Psoas muscle (tissue), 8 donors: ENCODE measurements at regions of chr19 and their contacts with region 1.

Region 1: DNA sequence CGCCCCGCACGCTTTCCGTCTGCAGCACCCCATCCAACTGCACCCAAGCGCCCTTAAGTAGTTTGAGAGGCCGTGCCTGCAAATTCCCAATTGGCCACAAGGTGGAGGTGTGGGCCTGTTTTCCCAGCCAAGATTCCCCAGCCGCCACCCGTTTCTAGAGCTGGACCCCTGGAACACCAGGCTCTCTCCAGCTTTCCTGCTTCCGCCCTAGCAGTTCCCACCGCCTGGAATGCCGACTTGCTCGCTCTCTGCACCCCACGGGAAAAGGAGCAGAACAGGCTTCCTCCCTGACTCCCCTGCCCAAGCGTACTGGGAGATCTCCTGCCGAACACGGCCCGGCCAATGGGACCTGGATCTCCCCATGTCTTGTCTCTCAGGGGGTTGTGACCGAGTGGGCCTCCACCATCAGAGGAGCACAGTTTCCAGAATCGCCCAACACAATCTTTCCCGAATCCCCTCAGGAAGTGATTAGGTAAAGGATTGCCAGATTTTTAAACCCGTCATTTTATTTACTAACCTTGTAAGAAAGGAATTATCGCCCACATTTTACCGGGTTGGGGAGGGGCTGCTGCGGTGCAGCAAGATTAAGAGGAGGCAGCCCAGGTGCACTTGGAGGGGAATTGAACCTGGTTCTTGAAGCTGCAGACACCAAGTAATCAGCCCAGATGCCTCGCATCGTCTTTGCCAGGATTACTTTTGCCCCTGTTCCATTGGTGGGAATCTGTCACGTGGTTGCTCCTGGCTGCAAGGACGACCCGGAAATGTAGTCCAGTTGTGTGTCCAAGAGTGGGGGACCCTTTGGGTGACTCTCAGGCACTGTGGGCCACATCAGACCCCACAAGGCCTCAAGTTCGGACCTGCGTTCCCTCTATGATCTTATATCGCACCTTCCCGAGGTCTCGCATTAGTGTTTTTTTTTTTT is 3.5 kb upstream of the NAPSA start:
- DNase-seq: peak; percentile 81 to 86
- ATAC-seq: peak; percentile 89 to 97 (median 94)
- H3K4me3 ChIP-seq: peak overlapping the region; percentile 79
- H3K27ac ChIP-seq: peak overlapping the region; percentile 39
- H3K4me1 ChIP-seq: peaks cover 8% of the 10 kb centered on the region
- H3K27me3 ChIP-seq: no peaks in the 10 kb centered on the region
- CTCF ChIP-seq: peak; percentile 86

Region 2: DNA sequence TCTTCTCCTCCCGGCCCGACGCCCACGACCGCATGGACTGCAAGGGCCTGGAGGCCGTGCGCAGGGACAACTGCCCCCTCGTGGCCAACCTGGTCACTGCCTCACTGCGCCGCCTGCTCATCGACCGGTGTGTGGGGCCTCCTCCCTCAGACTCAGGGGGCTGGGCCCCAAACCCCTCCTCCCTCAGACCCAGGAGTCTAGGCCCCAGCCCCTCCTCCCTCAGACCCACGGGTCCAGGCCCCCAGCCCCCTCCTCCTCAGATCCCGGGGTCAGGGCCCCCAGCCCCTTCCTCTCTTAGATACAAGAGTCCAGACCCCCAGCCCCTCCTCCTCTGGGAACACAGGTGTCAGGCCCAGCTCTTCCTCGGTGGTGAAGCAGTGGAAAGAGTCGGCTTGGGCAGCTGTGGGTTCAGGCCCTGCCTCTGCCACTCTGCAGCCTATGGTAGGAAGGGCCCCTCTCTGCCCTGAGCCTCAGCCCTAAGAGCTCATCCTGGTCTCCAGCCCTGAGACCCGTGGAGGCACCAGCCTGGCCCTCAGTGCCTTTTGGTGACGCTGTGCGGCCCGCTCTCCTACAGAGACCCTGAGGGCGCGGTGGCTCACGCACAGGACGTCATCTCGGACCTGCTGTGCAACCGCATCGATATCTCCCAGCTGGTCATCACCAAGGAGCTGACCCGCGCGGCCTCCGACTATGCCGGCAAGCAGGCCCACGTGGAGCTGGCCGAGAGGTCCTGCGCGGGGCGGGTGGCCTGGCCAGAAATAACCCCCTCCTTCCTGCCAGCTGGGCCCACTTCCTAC is 46.2 kb after region 1 on chr19:
- intact Hi-C with region 1: loop called (anchors 2 to 5 kb)
- DNase-seq: peak; percentile 81 to 87
- ATAC-seq: peak; percentile 78 to 89 (median 84)
- H3K4me3 ChIP-seq: no peak overlapping the region
- H3K27ac ChIP-seq: no peak overlapping the region
- H3K4me1 ChIP-seq: peaks cover 7% of the 10 kb centered on the region
- H3K27me3 ChIP-seq: peaks cover 0 to 10% (median 4%) of the 10 kb centered on the region in 3 donors
- CTCF ChIP-seq: peak; percentile 80

Region 3: DNA sequence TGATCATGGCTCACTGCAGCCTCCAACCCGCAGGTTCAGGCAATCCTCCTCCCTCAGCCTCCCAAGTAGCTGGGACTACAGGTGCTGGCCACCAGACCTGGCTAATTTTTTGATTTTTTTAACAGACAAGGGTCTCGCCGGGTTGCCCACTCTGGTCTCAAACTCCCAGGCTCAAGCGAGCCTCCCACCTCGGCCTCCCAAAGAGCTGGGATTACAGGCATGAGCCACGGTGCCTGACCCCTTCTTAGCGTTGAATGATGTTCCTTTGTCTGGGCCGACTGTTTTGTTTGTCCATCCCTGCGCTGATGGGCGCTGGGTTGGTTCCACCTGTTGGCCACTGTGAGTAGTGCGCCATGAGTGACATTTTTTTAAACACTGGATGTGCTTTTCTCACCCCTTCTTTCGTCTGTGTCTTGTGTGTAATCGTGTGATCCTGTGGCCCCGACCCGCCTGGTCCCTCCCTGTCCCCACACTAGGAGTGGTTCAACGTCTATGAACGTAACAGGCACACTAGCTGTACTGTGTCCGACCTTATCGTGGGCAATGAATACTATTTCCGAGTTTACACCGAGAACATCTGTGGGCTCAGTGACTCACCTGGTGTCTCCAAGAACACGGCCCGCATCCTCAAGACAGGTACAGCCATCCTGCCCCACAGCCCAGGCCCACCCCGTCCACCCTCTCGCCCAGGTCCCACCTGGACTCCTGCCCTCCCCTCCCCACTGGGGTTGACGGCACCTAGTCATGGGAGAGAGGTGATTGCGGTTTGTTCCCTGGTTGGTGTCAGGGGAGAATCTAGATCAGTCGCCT is 92.4 kb after region 1 on chr19:
- intact Hi-C with region 1: loop called in 1 of 2 experiments (anchors 5 kb)
- DNase-seq: peak; percentile 50 to 68
- ATAC-seq: peak; percentile 53 to 76 (median 69)
- H3K4me3 ChIP-seq: no peak overlapping the region
- H3K27ac ChIP-seq: no peak overlapping the region
- H3K4me1 ChIP-seq: peaks cover 9% of the 10 kb centered on the region
- H3K27me3 ChIP-seq: peaks cover 0 to 13% (median 2%) of the 10 kb centered on the region in 3 donors
- CTCF ChIP-seq: peak; percentile 76

Region 4: DNA sequence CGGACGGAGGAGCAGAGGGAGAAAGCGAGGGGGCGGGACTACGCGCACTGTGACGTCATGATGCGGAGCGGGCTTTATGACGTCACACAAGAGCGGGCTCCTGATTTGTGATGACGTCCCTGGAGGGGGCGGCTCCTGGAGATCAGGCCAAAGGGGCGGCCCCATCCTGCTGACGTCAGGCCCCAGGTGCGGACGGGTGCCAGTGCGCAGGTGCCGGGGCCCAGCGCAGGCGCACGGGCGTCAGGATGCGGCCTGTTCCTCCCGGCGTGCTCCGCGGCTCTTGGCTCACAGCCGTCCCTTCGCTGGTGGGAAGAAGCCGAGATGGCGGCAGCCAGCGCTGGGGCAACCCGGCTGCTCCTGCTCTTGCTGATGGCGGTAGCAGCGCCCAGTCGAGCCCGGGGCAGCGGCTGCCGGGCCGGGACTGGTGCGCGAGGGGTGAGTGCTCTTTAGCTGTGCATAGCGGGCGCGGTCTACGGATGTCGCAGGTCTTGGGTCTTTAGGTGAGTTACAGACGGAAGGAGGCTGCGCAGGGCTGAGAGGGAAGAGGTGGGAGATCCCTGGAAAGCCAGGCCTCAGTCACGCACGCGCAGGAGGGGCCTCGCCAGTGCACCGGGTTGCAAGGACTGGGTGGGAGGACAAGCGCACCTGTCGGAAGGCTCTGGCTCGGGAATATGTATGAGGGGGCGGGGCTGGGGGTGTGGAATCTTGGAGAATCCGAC is 107.5 kb after region 1 on chr19 and contains the starts of genes EMC10 and GARIN5A:
- intact Hi-C with region 1: loop called in 1 of 2 experiments (anchors 5 kb)
- DNase-seq: peak; percentile 90 to 95
- ATAC-seq: peak; percentile 92 to 97 (median 94)
- H3K4me3 ChIP-seq: peak within 1 kb of the TSS; percentile 97
- H3K27ac ChIP-seq: peak within 1 kb of the TSS; percentile 84
- H3K4me1 ChIP-seq: peaks cover 17% of the 10 kb centered on the region
- H3K27me3 ChIP-seq: no peaks in the 10 kb centered on the region
- CTCF ChIP-seq: no peak
- total RNA-seq, gene EMC10: 32.6 to 47.5 (median 43.3) TPM
- total RNA-seq, gene GARIN5A: 1.2 to 5.3 (median 4.7) TPM

Region 5: DNA sequence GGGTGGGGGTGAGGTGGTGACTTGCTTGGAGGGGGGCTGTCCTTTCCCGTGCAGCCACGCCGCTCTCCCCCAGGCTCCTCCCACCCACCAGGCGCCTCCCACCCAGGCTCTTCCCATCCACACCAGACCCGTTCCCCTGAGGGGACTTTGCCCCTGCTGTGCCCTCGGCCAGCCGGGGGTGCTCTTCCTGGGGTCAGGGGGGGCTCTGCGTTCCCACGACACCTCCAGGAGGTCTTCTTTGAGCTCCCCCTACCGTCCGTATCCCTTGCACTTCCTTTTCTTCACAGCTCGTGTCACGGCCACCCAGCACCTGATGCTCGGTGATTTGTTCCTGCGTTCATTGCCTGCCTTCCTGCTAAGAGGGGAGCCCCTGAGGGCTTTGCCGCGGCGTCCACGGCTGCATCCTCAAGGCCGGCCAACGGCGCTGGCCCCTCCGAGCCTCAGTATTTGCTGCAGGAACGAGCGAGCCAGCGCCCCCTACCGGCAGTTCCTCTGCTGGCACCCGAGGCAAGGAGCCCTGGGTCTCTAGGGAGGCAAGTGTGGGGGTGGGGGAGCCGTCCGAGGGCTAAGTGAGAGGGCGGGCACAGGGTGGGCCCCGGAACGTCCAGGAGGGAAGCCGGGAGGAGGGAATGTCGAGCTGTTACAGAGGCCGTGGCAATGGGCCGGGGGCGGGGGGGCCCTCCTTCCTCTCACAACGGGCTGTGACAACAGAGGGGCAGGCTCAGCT is 187.5 kb after region 1 on chr19:
- intact Hi-C with region 1: loop called (anchors 5 to 10 kb)
- DNase-seq: peak; percentile 74 to 83
- ATAC-seq: peak; percentile 61 to 91 (median 86)
- H3K4me3 ChIP-seq: peak overlapping the region; percentile 58
- H3K27ac ChIP-seq: no peak overlapping the region
- H3K4me1 ChIP-seq: peaks cover 4% of the 10 kb centered on the region
- H3K27me3 ChIP-seq: peaks cover 0 to 76% (median 16%) of the 10 kb centered on the region in 3 donors
- CTCF ChIP-seq: peak; percentile 59